Activated CD4-positive, alpha-beta T cell treated with anti-CD3 and anti-CD28 coated beads, Interleukin-2, amount 10 ng/mL, durations not matched to agents 7 days and 5 days (primary cell): ENCODE measurements at regions of chr11 and their contacts with region 1.

Region 1: GRCh38 chr11:111982019-111982464 is 43.2 kb upstream of the DLAT start:
- DNase-seq: peak; percentile 70
- H3K4me3 Mint-ChIP-seq: no peak overlapping the region
- H3K27ac Mint-ChIP-seq: peak overlapping the region; percentile 7
- H3K4me1 Mint-ChIP-seq: peaks cover 8% of the 10 kb centered on the region
- H3K27me3 Mint-ChIP-seq: peaks cover 16% of the 10 kb centered on the region

Region 2: GRCh38 chr11:111926505-111927391 is 55.3 kb before region 1 on chr11:
- CTCF ChIA-PET with region 1: interaction called, 12 read pairs
- POLR2A ChIA-PET with region 1: no interaction called
- DNase-seq: peak; percentile 95
- H3K4me3 Mint-ChIP-seq: peak overlapping the region; percentile 82
- H3K27ac Mint-ChIP-seq: peak overlapping the region; percentile 92
- H3K4me1 Mint-ChIP-seq: peaks cover 20% of the 10 kb centered on the region
- H3K27me3 Mint-ChIP-seq: peaks cover 8% of the 10 kb centered on the region

Region 3: DNA sequence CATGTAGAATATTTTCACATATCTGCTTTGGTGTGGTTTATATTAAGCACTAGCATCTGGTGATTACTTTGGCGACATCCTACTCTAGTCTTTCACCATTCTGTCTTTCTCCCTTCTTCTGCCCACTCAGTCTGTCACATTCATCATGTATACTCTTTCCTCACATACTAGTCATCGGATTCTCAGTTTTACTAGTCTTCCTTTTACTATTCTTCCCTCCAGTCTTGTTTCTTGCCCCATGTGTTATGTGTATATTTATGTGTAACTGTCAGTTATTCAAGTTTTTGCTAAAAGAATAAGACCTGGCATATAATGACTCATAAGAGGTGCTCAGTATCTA is 49.5 kb before region 1 on chr11:
- CTCF ChIA-PET with region 1: interaction called, 12 read pairs
- POLR2A ChIA-PET with region 1: no interaction called
- DNase-seq: no peak
- H3K4me3 Mint-ChIP-seq: no peak overlapping the region
- H3K27ac Mint-ChIP-seq: no peak overlapping the region
- H3K4me1 Mint-ChIP-seq: peaks cover 27% of the 10 kb centered on the region
- H3K27me3 Mint-ChIP-seq: no peaks in the 10 kb centered on the region

Region 4: DNA sequence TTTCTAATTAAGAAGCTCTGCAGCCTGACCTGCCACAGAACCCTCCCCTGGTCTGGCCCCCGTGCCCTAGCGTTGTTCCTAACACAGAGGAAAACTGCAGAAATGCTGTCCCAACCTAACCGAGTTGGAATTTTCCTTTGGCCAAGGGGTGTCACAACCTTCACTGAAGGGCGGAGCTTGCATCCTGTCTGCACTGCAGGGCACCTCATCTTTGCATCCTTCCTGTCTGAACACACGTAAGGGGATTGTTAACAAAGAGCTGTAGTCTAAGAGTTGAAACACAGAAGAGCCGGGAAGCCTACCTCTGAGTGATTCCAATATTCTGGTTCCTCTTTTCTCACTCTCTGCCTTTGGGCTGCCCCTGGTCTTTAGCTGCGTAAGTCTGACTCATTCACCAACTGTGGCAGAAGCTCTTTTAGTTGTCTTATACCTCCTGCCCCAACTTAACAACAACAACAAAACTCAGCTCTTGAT is 43.3 kb before region 1 on chr11:
- CTCF ChIA-PET with region 1: interaction called, 12 read pairs
- POLR2A ChIA-PET with region 1: no interaction called
- DNase-seq: peak; percentile 29
- H3K4me3 Mint-ChIP-seq: peak overlapping the region; percentile 81
- H3K27ac Mint-ChIP-seq: peak overlapping the region; percentile 82
- H3K4me1 Mint-ChIP-seq: peaks cover 41% of the 10 kb centered on the region
- H3K27me3 Mint-ChIP-seq: no peaks in the 10 kb centered on the region

Region 5: GRCh38 chr11:112024773-112025678 is 43.0 kb after region 1 on chr11 and contains the start of gene DLAT:
- CTCF ChIA-PET with region 1: no interaction called
- POLR2A ChIA-PET with region 1: no interaction called
- DNase-seq: peak; percentile 89
- H3K4me3 Mint-ChIP-seq: peak within 1 kb of the TSS; percentile 100
- H3K27ac Mint-ChIP-seq: peak within 1 kb of the TSS; percentile 99
- H3K4me1 Mint-ChIP-seq: peaks cover 25% of the 10 kb centered on the region
- H3K27me3 Mint-ChIP-seq: no peaks in the 10 kb centered on the region
- total RNA-seq, gene DLAT: 27.7 to 31.6 TPM

Region 6: GRCh38 chr11:112100462-112100861 is 118.4 kb after region 1 on chr11:
- CTCF ChIA-PET with region 1: no interaction called
- POLR2A ChIA-PET with region 1: no interaction called
- DNase-seq: no peak
- H3K4me3 Mint-ChIP-seq: no peak overlapping the region
- H3K27ac Mint-ChIP-seq: no peak overlapping the region
- H3K4me1 Mint-ChIP-seq: no peaks in the 10 kb centered on the region
- H3K27me3 Mint-ChIP-seq: no peaks in the 10 kb centered on the region